ENCODE measurements at regions of chr20 and their contacts with region 1.

Region 1: GRCh38 chr20:19497064-19497463 is 261.0 kb upstream of the RIN2 start:
- DNase-seq: peak in 1 of 2 donors; percentile 72
- H3K4me3 ChIP-seq: no peak overlapping the region
- H3K27ac ChIP-seq: peak overlapping the region; percentile 82 to 84
- H3K4me1 ChIP-seq: peaks cover 24 to 56% of the 10 kb centered on the region in 2 donors
- H3K27me3 ChIP-seq: no peaks in the 10 kb centered on the region
- CTCF ChIP-seq: no peak

Region 2: GRCh38 chr20:19212821-19213502 is 284.1 kb before region 1 on chr20:
- intact Hi-C with region 1: loop called (anchors 2 kb)
- DNase-seq: peak in 1 of 2 donors; percentile 83
- H3K4me3 ChIP-seq: peak overlapping the region; percentile 68 to 90
- H3K27ac ChIP-seq: peak overlapping the region; percentile 58 to 70
- H3K4me1 ChIP-seq: peaks cover 4 to 19% of the 10 kb centered on the region in 2 donors
- H3K27me3 ChIP-seq: no peaks in the 10 kb centered on the region
- CTCF ChIP-seq: peak; percentile 50 to 75 (median 52)

Region 3: DNA sequence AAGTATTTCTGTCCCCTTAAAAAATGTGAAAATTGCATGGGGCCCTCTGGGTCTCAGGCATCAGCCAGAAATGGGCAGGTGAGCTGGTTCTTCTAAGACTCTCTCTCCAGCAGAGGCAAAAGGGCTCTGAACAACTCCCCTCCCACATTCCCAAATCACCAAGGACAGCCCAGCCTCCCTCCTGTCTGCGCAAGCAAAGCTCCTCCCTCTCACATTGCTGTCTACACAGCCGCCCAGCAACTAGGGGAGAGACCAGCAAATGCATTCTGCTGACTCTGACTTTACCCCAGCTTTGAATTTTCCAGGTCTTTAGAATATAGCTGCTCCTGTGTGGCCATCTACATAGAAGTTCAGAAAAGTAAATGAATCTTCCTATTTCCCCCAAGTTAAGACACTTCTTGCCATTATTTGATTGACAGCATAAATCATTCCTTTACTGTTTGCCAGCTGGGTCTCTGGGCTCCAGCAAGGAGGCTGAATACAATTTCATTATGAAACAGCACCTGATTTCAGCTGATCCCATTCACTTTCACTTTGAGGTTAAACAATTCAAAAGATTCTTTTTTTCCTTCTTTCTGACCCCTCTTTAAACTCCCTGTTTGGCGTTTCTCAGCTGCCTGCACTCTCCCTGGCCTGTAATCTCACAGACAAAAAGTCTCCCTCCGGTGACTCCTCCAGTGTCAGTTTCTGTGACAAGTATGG is 55.2 kb after region 1 on chr20:
- intact Hi-C with region 1: loop called (anchors 5 kb)
- DNase-seq: peak in 1 of 2 donors; percentile 74
- H3K4me3 ChIP-seq: peak overlapping the region in 1 of 2 donors; percentile 13
- H3K27ac ChIP-seq: peak overlapping the region; percentile 51 to 61
- H3K4me1 ChIP-seq: no peaks in the 10 kb centered on the region
- H3K27me3 ChIP-seq: no peaks in the 10 kb centered on the region
- CTCF ChIP-seq: no peak

Region 4: GRCh38 chr20:19562426-19562825 is 65.4 kb after region 1 on chr20:
- intact Hi-C with region 1: no loop called
- DNase-seq: no peak
- H3K4me3 ChIP-seq: no peak overlapping the region
- H3K27ac ChIP-seq: no peak overlapping the region
- H3K4me1 ChIP-seq: no peaks in the 10 kb centered on the region
- H3K27me3 ChIP-seq: no peaks in the 10 kb centered on the region
- CTCF ChIP-seq: no peak

Measured in ascending aorta (tissue), 2 donors.